Ovary (tissue), 10 donors: ENCODE measurements at regions of chr16 and their contacts with region 1.

Region 1: DNA sequence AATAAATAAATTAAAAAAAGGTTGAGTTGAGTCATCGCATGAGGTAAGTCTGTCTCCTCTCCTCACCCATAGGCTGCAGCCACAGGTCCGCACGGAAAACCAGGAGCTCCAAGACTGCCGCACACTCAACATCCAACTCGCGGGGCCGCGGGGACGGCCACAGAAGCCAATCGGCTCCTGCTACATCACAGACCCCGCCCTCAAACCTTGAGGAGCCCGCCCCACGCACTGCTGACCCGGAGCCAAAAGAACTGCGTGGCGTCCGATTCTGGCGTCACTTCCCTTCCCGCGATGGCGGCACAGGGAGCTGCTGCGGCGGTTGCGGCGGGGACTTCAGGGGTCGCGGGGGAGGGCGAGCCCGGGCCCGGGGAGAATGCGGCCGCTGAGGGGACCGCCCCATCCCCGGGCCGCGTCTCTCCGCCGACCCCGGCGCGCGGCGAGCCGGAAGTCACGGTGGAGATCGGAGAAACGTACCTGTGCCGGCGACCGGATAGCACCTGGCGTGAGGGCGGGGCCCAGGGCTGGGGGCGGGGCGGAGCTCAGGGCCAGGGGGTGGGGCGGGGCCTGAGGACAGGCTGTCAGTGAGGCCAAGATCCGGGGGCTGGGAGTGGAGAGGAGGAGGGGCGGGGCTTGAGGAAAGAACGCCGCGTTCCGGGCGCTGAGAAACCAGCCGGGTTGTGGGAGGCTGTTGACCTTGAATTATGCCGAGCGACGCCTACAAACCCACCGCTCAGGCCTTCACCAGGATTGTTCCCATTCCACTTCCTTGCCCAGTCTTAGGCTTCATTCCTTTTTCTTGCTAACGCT is at the start of gene KAT8:
- DNase-seq: peak; percentile 99
- H3K4me3 ChIP-seq: peak within 1 kb of the TSS; percentile 97
- H3K27ac ChIP-seq: peak within 1 kb of the TSS; percentile 88 to 97
- H3K4me1 ChIP-seq: peaks cover 9% of the 10 kb centered on the region
- H3K27me3 ChIP-seq: no peaks in the 10 kb centered on the region
- CTCF ChIP-seq: peak in 1 of 3 donors; percentile 16
- EP300 ChIP-seq: peak; percentile 32
- POLR2A ChIP-seq: peak; percentile 99
- total RNA-seq, gene KAT8: 71.5 to 129 (median 105) TPM

Region 2: DNA sequence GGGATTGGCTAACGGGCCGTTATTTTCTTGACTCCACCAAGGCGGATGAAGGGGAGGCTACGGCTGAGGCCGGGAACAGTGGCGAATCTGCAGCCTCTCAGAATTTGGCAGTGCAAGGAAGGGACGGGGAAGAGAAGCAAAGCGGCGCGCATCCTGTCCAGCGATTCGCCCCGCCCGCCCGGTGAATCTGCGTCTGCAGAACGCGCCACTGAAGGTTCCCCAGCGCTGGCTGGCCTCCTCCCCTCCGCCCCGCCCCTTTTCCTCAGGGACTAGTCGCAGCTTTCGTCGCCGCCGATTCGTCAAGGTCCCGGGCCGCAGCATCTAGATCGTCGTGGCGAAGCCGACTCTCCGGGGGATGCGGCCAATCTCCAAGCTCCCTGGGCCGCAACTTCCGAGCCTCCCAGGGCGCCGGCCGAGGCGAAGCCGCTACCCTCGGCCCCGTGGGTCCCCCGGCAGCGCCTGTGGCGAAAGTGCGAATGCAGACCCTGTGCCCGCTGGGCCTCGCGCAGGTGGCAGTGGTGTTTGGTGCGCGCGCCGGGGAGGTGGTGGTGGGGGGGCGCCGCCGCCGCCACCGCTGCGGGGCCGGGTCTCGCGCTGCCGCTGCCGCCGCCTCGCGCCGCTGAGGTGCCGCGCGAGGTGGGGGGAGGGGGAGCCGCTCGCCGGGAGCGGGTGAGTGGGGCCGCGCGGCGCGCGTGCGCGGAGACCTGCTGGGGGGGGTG is 160.0 kb before region 1 on chr16 and contains the start of gene SETD1A:
- intact Hi-C with region 1: loop called in 1 of 4 experiments (anchors 10 kb)
- DNase-seq: peak; percentile 96 to 98 (median 97)
- H3K4me3 ChIP-seq: peak within 1 kb of the TSS; percentile 82
- H3K27ac ChIP-seq: peak within 1 kb of the TSS; percentile 97 to 98
- H3K4me1 ChIP-seq: peaks cover 11% of the 10 kb centered on the region
- H3K27me3 ChIP-seq: no peaks in the 10 kb centered on the region
- CTCF ChIP-seq: peak in 1 of 3 donors; percentile 11
- EP300 ChIP-seq: no peak
- POLR2A ChIP-seq: peak; percentile 66
- total RNA-seq, gene SETD1A: 5.0 to 31.8 (median 24.9) TPM